T-cell (primary cell): ENCODE measurements at regions of chr16 and their contacts with region 1.

Region 1: GRCh38 chr16:66594739-66595138 is 9.8 kb upstream of the CMTM3 start:
- DNase-seq: no peak
- ATAC-seq: no peak
- H3K4me3 ChIP-seq: no peak overlapping the region
- H3K4me3 Mint-ChIP-seq: no peak overlapping the region
- H3K27ac ChIP-seq: no peak overlapping the region
- H3K27ac Mint-ChIP-seq: no peak overlapping the region
- H3K4me1 ChIP-seq: peaks cover 8 to 20% of the 10 kb centered on the region in 2 experiments
- H3K4me1 Mint-ChIP-seq: peaks cover 30 to 39% (median 36%) of the 10 kb centered on the region in 3 donors
- H3K27me3 ChIP-seq: peaks cover 0 to 2% of the 10 kb centered on the region in 2 experiments
- H3K27me3 Mint-ChIP-seq: no peaks in the 10 kb centered on the region

Region 2: GRCh38 chr16:66569827-66570405 is 24.8 kb before region 1 on chr16:
- CTCF ChIA-PET with region 1: interaction called in 1 of 2 experiments, 10 read pairs
- POLR2A ChIA-PET with region 1: no interaction called
- DNase-seq: no peak
- ATAC-seq: no peak
- H3K4me3 ChIP-seq: no peak overlapping the region
- H3K4me3 Mint-ChIP-seq: no peak overlapping the region
- H3K27ac ChIP-seq: no peak overlapping the region
- H3K27ac Mint-ChIP-seq: peak overlapping the region in 1 of 2 donors; percentile 5
- H3K4me1 ChIP-seq: no peaks in the 10 kb centered on the region
- H3K4me1 Mint-ChIP-seq: peaks cover 0 to 9% (median 7%) of the 10 kb centered on the region in 3 donors
- H3K27me3 ChIP-seq: no peaks in the 10 kb centered on the region
- H3K27me3 Mint-ChIP-seq: no peaks in the 10 kb centered on the region